Caco-2 (cell line): ENCODE measurements at regions of chr7 and their contacts with region 1.

Region 1: DNA sequence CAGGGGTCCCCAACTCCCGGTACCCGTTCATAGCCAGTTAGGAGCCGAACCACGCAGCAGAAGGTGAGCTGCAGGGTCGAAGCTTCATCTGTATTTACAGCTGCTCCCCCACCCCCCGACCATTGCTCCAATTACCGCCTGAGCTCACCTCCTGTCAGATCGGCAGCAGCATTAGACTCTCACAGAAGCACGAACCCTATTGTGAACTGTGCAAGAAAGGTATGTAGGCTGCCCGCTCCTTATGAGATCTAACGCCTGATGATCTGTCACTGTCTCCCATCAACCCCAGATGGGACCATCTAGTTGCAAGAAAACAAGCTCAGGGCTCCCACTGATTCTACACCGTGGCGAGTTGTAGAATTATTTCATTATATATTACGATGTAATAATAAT is 14.6 kb upstream of the AZGP1 start:
- DNase-seq: no peak
- H3K4me3 ChIP-seq: no peak overlapping the region
- H3K4me3 Mint-ChIP-seq: no peak overlapping the region
- H3K27ac Mint-ChIP-seq: no peak overlapping the region
- H3K4me1 ChIP-seq: peaks cover 9% of the 10 kb centered on the region; the same call in 1 of the 2 replicates
- H3K4me1 Mint-ChIP-seq: no peaks in the 10 kb centered on the region
- H3K27me3 ChIP-seq: no peaks in the 10 kb centered on the region
- H3K27me3 Mint-ChIP-seq: peaks cover 9% of the 10 kb centered on the region
- CTCF ChIP-seq: no peak

Region 2: GRCh38 chr7:99897322-99898022 is 93.0 kb before region 1 on chr7:
- CTCF ChIA-PET with region 1: no interaction called
- POLR2A ChIA-PET with region 1: no interaction called
- intact Hi-C with region 1: no loop called
- DNase-seq: no peak
- H3K4me3 ChIP-seq: no peak overlapping the region
- H3K4me3 Mint-ChIP-seq: no peak overlapping the region
- H3K27ac Mint-ChIP-seq: no peak overlapping the region
- H3K4me1 ChIP-seq: no peaks in the 10 kb centered on the region
- H3K4me1 Mint-ChIP-seq: no peaks in the 10 kb centered on the region
- H3K27me3 ChIP-seq: no peaks in the 10 kb centered on the region
- H3K27me3 Mint-ChIP-seq: no peaks in the 10 kb centered on the region
- CTCF ChIP-seq: no peak

Region 3: DNA sequence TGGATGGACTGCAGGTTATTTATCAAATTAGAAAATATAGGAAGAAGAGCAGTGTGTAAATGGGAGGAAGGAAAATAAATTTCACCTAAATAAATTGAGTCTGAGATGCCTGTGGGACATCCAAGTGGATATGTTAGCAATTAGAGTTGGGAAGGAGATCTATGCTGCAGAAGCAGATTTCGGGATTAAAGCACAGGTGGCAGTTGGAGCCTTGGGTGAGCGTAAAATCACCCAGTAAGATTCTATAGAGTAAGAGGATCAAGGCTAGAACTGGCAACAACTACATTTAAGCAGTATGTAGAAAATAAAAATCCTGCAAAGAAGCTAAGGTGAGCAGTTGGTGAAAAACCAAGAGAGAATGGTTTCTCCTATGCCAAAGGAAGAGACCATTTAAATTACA is 79.5 kb before region 1 on chr7:
- CTCF ChIA-PET with region 1: interaction called, 5 read pairs
- POLR2A ChIA-PET with region 1: no interaction called
- intact Hi-C with region 1: loop called (anchors 1 kb)
- DNase-seq: no peak
- H3K4me3 ChIP-seq: no peak overlapping the region
- H3K4me3 Mint-ChIP-seq: no peak overlapping the region
- H3K27ac Mint-ChIP-seq: no peak overlapping the region
- H3K4me1 ChIP-seq: no peaks in the 10 kb centered on the region
- H3K4me1 Mint-ChIP-seq: no peaks in the 10 kb centered on the region
- H3K27me3 ChIP-seq: no peaks in the 10 kb centered on the region
- H3K27me3 Mint-ChIP-seq: no peaks in the 10 kb centered on the region
- CTCF ChIP-seq: no peak

Region 4: DNA sequence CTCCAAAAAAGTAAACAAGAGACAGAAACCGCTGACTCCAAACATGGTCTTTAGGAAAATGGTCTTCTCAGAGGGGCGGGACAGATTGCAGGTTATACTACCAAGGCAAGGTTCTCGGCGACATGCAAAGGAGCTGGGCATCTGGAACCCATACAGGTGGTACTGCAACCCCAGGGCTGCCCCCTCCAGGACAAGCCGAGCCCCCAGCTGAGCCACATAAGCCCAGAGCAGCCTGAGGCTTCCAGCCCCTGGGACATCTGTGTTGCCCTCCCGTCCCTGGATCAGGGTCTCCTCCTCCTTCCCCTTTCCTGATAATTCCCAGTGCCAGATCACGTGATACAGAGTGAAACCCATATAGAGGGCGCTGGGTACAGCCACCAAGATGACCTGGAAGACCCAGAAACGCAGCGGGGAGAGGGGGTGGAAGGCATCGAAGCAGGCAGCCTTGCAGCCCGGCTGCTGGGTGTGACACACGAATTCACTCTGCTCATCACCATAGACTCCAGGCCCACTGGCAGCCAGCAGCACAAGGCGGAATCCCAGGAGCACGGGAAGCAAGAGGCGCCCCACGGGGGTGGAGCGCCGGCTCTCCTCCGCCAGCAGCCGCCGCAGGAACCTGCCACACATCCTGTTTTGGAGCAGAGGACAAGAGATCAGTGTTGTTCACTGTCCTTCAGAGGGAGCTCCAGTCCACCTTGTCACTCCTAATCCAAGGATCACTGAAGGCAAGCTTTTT is 61.3 kb before region 1 on chr7 and contains the start of gene GJC3:
- CTCF ChIA-PET with region 1: interaction called, 5 read pairs
- POLR2A ChIA-PET with region 1: no interaction called
- intact Hi-C with region 1: loop called (anchors 1 kb)
- DNase-seq: peak; percentile 67 to 70
- H3K4me3 ChIP-seq: peak within 1 kb of the TSS; percentile 37
- H3K4me3 Mint-ChIP-seq: peak within 1 kb of the TSS; percentile 75
- H3K27ac Mint-ChIP-seq: no peak within 1 kb of the TSS
- H3K4me1 ChIP-seq: no peaks in the 10 kb centered on the region
- H3K4me1 Mint-ChIP-seq: no peaks in the 10 kb centered on the region
- H3K27me3 ChIP-seq: no peaks in the 10 kb centered on the region
- H3K27me3 Mint-ChIP-seq: peaks cover 23% of the 10 kb centered on the region
- CTCF ChIP-seq: peak; percentile 23 to 51
- total RNA-seq, gene GJC3: 0.27 TPM in 1 of 2 replicates, not detected in the other

Region 5: GRCh38 chr7:100132697-100133151 is 142.3 kb after region 1 on chr7:
- CTCF ChIA-PET with region 1: no interaction called
- POLR2A ChIA-PET with region 1: no interaction called
- intact Hi-C with region 1: no loop called
- DNase-seq: peak; percentile 77 to 80
- H3K4me3 ChIP-seq: no peak overlapping the region
- H3K4me3 Mint-ChIP-seq: no peak overlapping the region
- H3K27ac Mint-ChIP-seq: no peak overlapping the region
- H3K4me1 ChIP-seq: peaks cover 7% of the 10 kb centered on the region; the same call in 1 of the 2 replicates
- H3K4me1 Mint-ChIP-seq: peaks cover 17% of the 10 kb centered on the region
- H3K27me3 ChIP-seq: no peaks in the 10 kb centered on the region
- H3K27me3 Mint-ChIP-seq: no peaks in the 10 kb centered on the region
- CTCF ChIP-seq: peak; percentile 91 to 95